Caco-2 (cell line): ENCODE measurements at regions of chr17 and their contacts with region 1.

Region 1: DNA sequence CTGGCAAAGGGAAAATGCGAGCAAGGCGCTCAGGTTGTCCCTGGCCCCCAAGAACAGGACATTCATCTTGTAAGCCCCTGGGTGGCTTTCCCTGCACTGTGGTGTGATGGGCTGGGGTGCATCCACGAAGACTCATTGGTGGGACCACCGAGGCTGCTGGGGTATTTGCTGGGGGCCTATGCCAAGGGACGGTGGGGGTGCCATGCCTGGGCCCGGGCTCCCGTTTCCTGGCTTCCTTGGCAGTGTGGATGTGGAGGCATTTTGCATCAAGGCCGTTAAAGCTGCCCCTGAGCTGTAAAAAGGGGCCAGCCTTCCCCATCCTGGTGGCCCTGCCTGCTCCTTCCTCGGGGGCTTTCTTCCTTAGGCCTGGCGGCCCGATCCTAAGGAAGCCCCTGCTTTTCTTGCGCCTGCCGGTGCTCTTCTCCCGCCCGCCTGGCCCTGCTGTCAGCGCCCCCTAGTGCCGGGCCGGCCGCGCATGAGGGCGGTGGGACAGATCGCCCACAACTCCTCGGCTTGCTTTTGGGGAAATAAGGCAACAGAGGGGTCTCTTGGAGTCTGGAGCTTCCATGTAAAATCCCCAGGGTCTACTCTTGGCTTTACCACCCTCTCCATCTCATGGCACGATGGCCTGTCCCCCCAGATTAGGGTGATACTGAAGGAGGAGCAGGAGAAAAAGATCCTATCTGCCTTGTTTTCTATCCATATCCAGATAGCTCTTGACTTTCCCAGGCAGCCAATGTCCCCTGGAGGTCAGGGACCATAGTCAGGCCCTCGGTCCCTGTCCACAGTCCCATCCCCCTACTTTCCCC is 9.8 kb upstream of the TBX2 start:
- DNase-seq: peak in 1 of 2 experiments; percentile 58
- H3K4me3 ChIP-seq: no peak overlapping the region
- H3K4me3 Mint-ChIP-seq: no peak overlapping the region
- H3K27ac Mint-ChIP-seq: no peak overlapping the region
- H3K4me1 ChIP-seq: peaks cover 23% of the 10 kb centered on the region
- H3K4me1 Mint-ChIP-seq: peaks cover 12% of the 10 kb centered on the region
- H3K27me3 ChIP-seq: no peaks in the 10 kb centered on the region
- H3K27me3 Mint-ChIP-seq: no peaks in the 10 kb centered on the region
- CTCF ChIP-seq: peak; percentile 75 to 85

Region 2: GRCh38 chr17:61354895-61355874 is 34.7 kb before region 1 on chr17:
- CTCF ChIA-PET with region 1: interaction called, 4 read pairs
- POLR2A ChIA-PET with region 1: no interaction called
- intact Hi-C with region 1: loop called (anchors 5 kb)
- DNase-seq: no peak
- H3K4me3 ChIP-seq: no peak overlapping the region
- H3K4me3 Mint-ChIP-seq: no peak overlapping the region
- H3K27ac Mint-ChIP-seq: no peak overlapping the region
- H3K4me1 ChIP-seq: peaks cover 10% of the 10 kb centered on the region
- H3K4me1 Mint-ChIP-seq: no peaks in the 10 kb centered on the region
- H3K27me3 ChIP-seq: no peaks in the 10 kb centered on the region
- H3K27me3 Mint-ChIP-seq: no peaks in the 10 kb centered on the region
- CTCF ChIP-seq: no peak